ENCODE measurements at regions of chr3 and their contacts with region 1.

Region 1: DNA sequence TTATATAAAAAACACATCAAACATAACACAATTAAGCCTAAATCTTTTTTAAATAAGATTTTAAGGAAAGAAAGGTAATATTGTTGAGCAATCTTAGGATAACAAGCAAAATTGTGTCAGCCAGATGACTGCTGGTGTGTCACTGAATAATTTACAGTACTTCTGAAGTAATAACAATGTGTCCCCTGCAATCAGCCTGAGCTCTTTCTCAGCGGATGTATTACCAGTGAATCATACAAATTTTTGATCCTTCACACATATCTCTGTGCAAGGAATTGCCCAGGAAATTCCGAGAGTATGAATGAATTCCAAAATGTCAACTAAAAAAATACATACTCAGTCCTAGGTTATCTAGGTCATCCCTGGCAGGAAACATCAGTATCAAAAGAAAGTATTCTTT is 76.6 kb upstream of the PTX3 start:
- DNase-seq: peak; percentile 94
- H3K4me3 ChIP-seq: no peak overlapping the region
- H3K27ac ChIP-seq: peak overlapping the region; percentile 84
- H3K4me1 ChIP-seq: peaks cover 61% of the 10 kb centered on the region
- H3K27me3 ChIP-seq: no peaks in the 10 kb centered on the region
- CTCF ChIP-seq: no peak
- POLR2A ChIP-seq: peak; percentile 78

Region 2: DNA sequence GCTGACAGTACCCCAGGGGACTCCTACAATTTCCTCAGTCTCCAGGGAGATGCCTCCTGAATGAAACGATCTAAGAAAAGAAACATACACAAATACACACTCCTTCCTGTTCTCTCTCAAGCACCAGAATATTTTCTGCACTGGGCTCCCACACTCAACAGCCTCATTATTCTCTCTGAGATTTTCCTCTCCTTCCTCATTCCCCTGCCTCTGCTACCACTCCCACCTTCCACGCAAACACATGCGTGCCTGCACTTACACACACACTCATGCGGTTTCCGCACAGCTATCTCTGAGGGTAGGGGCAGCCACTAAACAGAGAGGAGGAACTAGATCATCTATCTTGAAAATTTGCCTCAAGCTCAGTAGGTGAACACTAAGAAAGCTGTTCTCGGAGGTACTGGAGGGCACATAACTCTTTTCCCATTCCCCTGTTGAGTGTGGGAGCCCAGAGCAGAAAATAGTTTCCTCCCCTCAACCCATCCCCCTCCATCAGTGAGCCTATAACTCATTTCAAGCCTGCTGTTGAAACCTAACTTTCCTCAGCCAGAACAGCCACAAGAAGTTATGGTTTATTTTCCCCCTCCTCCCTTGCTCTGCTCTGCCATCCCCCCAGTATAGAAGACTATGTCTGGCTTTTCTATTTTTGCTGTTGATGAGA is 716.2 kb before region 1 on chr3:
- CTCF ChIA-PET with region 1: no interaction called
- POLR2A ChIA-PET with region 1: no interaction called
- dilution Hi-C with region 1: no loop called
- intact Hi-C with region 1: no loop called
- DNase-seq: peak; percentile 3
- H3K4me3 ChIP-seq: no peak overlapping the region
- H3K27ac ChIP-seq: no peak overlapping the region
- H3K4me1 ChIP-seq: no peaks in the 10 kb centered on the region
- H3K27me3 ChIP-seq: peaks cover 0 to 6% of the 10 kb centered on the region in 2 experiments
- CTCF ChIP-seq: no peak
- POLR2A ChIP-seq: no peak

Region 3: GRCh38 chr3:157248590-157249422 is 111.2 kb before region 1 on chr3:
- CTCF ChIA-PET with region 1: interaction called, 4 read pairs
- POLR2A ChIA-PET with region 1: no interaction called
- dilution Hi-C with region 1: no loop called
- intact Hi-C with region 1: loop called (anchors 2 kb)
- DNase-seq: peak; percentile 94
- H3K4me3 ChIP-seq: no peak overlapping the region
- H3K27ac ChIP-seq: peak overlapping the region; percentile 39
- H3K4me1 ChIP-seq: peaks cover 23% of the 10 kb centered on the region
- H3K27me3 ChIP-seq: no peaks in the 10 kb centered on the region
- CTCF ChIP-seq: no peak
- POLR2A ChIP-seq: peak; percentile 37

Region 4: DNA sequence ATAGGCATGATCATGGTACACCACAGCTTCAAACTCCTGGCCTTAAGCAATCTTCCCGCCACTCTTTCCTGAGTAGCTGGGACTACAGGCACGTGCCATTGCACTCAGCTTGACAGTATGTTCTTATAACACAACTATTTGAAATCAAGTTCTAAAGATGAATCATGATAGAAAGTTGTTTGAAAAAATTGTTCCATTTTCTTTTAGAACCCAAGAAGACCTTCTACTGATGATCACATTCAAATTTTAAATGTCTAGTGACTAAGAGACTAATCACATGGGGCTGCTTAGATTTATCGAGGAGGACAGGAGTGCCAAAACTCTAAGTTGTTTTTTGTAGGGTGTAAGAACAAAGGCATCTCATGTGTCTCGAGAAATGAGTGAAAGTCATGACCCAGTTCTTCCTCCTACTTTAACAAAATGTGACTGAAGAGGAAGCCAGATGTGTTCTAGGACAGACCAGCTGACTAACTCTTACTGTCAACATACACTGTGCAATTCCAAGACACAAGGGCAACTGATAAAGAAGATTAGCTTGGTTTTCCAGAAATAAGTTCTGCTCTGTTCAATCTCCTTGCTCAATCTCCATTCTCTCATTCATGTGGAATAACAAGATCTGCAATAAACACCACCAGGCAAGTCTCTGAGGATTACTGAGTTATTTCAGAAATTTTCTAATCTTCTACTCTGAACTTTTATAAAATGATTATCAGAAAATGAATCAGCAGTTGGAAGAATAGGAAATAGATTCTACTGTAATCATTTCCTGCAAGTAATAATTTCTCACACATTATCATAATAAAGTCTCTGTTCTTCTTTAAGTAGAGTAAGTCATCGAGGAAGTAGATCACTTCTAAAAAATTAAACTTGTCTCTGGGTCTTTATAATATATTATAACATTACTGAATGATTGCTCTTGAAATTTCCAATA is 77.5 kb before region 1 on chr3:
- CTCF ChIA-PET with region 1: interaction called, 4 read pairs
- POLR2A ChIA-PET with region 1: interaction called, 3 read pairs
- dilution Hi-C with region 1: no loop called
- intact Hi-C with region 1: loop called (anchors 1 kb)
- DNase-seq: peak; percentile 94
- H3K4me3 ChIP-seq: peak overlapping the region in 1 of 3 experiments; percentile 41
- H3K27ac ChIP-seq: peak overlapping the region; percentile 74
- H3K4me1 ChIP-seq: peaks cover 64% of the 10 kb centered on the region
- H3K27me3 ChIP-seq: no peaks in the 10 kb centered on the region
- CTCF ChIP-seq: no peak
- POLR2A ChIP-seq: no peak

Region 5: GRCh38 chr3:157388976-157389375 is 28.9 kb after region 1 on chr3:
- CTCF ChIA-PET with region 1: interaction called, 5 read pairs
- POLR2A ChIA-PET with region 1: no interaction called
- dilution Hi-C with region 1: no loop called
- intact Hi-C with region 1: loop called (anchors 2 kb)
- DNase-seq: peak; percentile 61
- H3K4me3 ChIP-seq: no peak overlapping the region
- H3K27ac ChIP-seq: peak overlapping the region; percentile 47
- H3K4me1 ChIP-seq: peaks cover 21% of the 10 kb centered on the region
- H3K27me3 ChIP-seq: no peaks in the 10 kb centered on the region
- CTCF ChIP-seq: no peak
- POLR2A ChIP-seq: no peak

Region 6: DNA sequence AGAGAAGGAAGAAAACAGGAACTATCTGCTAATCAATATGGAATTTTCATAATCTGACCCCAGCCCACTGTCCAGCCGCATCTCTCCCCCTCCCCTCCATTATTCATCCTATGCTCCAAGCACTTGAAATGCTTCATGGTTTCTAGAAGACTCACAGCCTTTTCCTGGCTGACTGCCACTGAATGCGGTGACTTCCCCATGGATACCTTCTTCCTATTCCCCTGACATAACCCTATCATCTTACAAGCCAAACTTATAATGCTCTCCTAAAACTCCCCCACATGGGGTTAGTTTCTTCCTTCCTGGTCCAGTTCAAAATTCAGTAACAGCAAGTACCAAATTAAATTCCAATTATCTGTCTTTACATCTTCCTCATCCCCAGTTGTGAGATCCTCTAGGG is 45.4 kb after region 1 on chr3:
- CTCF ChIA-PET with region 1: no interaction called
- POLR2A ChIA-PET with region 1: no interaction called
- dilution Hi-C with region 1: no loop called
- intact Hi-C with region 1: no loop called
- DNase-seq: no peak
- H3K4me3 ChIP-seq: no peak overlapping the region
- H3K27ac ChIP-seq: no peak overlapping the region
- H3K4me1 ChIP-seq: peaks cover 24% of the 10 kb centered on the region
- H3K27me3 ChIP-seq: no peaks in the 10 kb centered on the region
- CTCF ChIP-seq: no peak
- POLR2A ChIP-seq: no peak

Region 7: GRCh38 chr3:157436583-157437291 is 76.7 kb after region 1 on chr3 and contains the start of gene PTX3:
- CTCF ChIA-PET with region 1: interaction called, 14 read pairs
- POLR2A ChIA-PET with region 1: interaction called, 18 read pairs
- dilution Hi-C with region 1: no loop called
- intact Hi-C with region 1: loop called (anchors 1 kb)
- DNase-seq: peak; percentile 85
- H3K4me3 ChIP-seq: peak within 1 kb of the TSS; percentile 68 to 93 (median 79)
- H3K27ac ChIP-seq: peak within 1 kb of the TSS; percentile 74
- H3K4me1 ChIP-seq: peaks cover 31% of the 10 kb centered on the region
- H3K27me3 ChIP-seq: no peaks in the 10 kb centered on the region
- CTCF ChIP-seq: no peak
- POLR2A ChIP-seq: peak; percentile 89
- total RNA-seq, gene PTX3: 149 and 172 TPM in 2 replicates

Measured in endothelial cell of umbilical vein (primary cell).